SK-N-SH (cell line): ENCODE measurements at regions of chr17 and their contacts with region 1.

Region 1: DNA sequence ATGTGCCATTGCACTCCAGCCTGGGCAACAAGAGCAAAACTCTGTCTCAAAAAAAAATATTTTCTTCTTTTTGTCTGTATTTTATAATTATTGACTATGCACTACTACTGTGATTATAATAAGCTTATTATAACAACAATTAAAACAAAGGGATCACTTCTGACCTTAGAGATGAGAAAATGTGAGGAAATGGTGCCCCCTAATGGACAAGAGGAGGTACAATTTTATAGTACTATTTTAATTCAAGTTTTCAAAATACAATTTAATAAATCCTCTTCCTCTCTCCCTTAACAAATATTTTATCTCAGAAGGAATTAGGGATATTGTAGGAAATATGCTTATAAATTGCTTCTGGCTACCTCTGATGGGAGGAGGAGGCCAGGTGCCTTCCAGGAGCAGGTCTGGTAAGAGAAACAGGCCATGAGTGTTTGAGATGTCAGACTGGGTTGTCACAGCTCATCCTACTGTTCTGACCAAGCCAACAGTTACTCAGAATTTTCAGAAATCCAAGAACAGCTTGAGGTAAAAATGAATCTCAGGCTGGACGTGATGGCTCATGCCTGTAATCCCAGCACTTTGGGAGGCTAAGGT is 14.0 kb downstream of the VPS53 start:
- DNase-seq: peak; percentile 58
- H3K4me3 ChIP-seq: peak overlapping the region in 1 of 2 experiments; percentile 47; a peak in 1 of 4 replicates
- H3K27ac ChIP-seq: no peak overlapping the region
- H3K4me1 ChIP-seq: peaks cover 4 to 32% of the 10 kb centered on the region in 2 experiments; a peak in 1 of 4 replicates
- H3K27me3 ChIP-seq: no peaks in the 10 kb centered on the region
- CTCF ChIP-seq: peak; percentile 85
- EP300 ChIP-seq: no peak
- RAD21 ChIP-seq: peak; percentile 83

Region 2: DNA sequence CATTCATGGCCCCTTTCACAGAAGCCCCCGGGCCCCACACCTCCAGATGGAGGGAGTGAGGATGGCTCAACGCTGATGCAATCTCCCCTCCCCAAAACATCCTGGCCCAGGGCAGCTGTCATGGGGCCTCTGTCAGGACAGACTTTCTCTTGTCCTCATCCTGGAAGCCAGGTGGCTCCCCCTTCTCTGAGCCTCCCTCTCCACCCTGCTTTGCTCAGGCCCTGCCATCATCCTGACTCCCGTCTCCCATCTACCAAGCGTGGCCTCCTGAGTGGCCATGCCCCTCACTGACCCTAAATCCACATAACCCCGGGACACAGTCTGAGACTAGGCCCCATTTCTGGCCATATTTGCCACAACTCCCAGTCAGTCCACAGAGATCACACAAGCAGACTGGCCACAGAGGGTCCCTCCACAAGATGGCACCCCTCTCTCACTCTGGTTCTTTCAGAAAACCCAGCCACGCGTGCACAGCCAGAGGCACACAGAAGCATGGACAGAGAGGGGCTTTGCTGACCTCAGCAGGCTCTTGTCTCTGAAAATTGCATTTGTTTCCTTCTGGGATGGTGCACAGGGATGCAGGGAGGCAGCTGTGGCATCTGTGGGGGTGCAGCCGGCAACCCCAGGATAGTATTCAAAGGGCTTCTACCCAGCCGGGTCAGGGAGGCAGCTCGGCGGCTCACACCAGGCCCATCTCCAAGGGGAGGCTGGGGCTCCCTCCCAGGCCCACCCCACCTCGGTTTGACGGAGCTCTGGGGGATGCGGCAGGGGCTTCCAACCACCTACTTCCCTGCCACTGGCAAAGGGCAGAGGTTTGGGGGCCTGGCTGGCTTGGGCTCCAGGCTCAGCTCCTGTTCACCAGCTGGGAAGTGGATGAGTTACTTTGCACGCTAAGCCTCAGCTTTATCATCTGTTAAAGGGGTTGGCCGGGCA is 536.0 kb before region 1 on chr17:
- CTCF ChIA-PET with region 1: interaction called, 12 read pairs
- POLR2A ChIA-PET with region 1: no interaction called
- DNase-seq: peak; percentile 88
- H3K4me3 ChIP-seq: no peak overlapping the region; a peak in 1 of 4 replicates
- H3K27ac ChIP-seq: no peak overlapping the region; a peak in 1 of 4 replicates
- H3K4me1 ChIP-seq: no peaks in the 10 kb centered on the region
- H3K27me3 ChIP-seq: no peaks in the 10 kb centered on the region; the same call in 1 of the 2 replicates
- CTCF ChIP-seq: peak; percentile 54
- EP300 ChIP-seq: no peak
- RAD21 ChIP-seq: peak; percentile 84

Region 3: GRCh38 chr17:497241-498034 is 203.2 kb before region 1 on chr17:
- CTCF ChIA-PET with region 1: interaction called, 14 read pairs
- POLR2A ChIA-PET with region 1: no interaction called
- DNase-seq: no peak
- H3K4me3 ChIP-seq: no peak overlapping the region
- H3K27ac ChIP-seq: no peak overlapping the region
- H3K4me1 ChIP-seq: no peaks in the 10 kb centered on the region; a peak in 1 of 4 replicates
- H3K27me3 ChIP-seq: no peaks in the 10 kb centered on the region
- CTCF ChIP-seq: no peak
- EP300 ChIP-seq: no peak
- RAD21 ChIP-seq: no peak

Region 4: DNA sequence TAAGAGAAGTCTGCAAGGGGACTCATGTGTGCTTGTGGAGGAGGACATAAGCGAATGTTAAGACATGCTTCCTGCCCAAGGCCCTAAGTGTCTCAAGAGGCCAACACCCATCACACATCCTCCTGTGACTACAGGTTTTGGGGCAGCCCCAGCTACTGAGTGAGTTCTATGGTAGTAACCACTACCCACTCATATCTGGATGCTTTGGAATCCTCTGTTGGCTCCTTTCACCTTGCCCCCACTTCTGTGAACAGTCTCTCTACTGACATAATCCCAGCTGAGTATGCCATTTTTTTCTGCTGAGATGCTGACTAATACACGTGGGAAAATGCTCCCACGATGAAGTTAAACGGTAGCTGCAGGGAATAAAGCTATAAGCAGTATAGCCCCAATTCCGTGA is 139.5 kb before region 1 on chr17:
- CTCF ChIA-PET with region 1: interaction called, 13 read pairs
- POLR2A ChIA-PET with region 1: no interaction called
- DNase-seq: no peak
- H3K4me3 ChIP-seq: no peak overlapping the region
- H3K27ac ChIP-seq: peak overlapping the region in 1 of 2 experiments; percentile 82; a peak in 2 of 4 replicates
- H3K4me1 ChIP-seq: peaks cover 0 to 38% of the 10 kb centered on the region in 2 experiments; a peak in 3 of 4 replicates
- H3K27me3 ChIP-seq: no peaks in the 10 kb centered on the region
- CTCF ChIP-seq: no peak
- EP300 ChIP-seq: no peak
- RAD21 ChIP-seq: no peak

Region 5: GRCh38 chr17:601244-601925 is 99.2 kb before region 1 on chr17:
- CTCF ChIA-PET with region 1: interaction called, 20 read pairs
- POLR2A ChIA-PET with region 1: no interaction called
- DNase-seq: peak; percentile 79
- H3K4me3 ChIP-seq: no peak overlapping the region
- H3K27ac ChIP-seq: peak overlapping the region; percentile 59 to 99; a peak in 3 of 4 replicates
- H3K4me1 ChIP-seq: peaks cover 28 to 59% of the 10 kb centered on the region in 2 experiments
- H3K27me3 ChIP-seq: no peaks in the 10 kb centered on the region
- CTCF ChIP-seq: no peak
- EP300 ChIP-seq: peak; percentile 12 to 88; a peak in 2 of 4 replicates
- RAD21 ChIP-seq: no peak; the same call in 1 of the 2 replicates

Region 6: DNA sequence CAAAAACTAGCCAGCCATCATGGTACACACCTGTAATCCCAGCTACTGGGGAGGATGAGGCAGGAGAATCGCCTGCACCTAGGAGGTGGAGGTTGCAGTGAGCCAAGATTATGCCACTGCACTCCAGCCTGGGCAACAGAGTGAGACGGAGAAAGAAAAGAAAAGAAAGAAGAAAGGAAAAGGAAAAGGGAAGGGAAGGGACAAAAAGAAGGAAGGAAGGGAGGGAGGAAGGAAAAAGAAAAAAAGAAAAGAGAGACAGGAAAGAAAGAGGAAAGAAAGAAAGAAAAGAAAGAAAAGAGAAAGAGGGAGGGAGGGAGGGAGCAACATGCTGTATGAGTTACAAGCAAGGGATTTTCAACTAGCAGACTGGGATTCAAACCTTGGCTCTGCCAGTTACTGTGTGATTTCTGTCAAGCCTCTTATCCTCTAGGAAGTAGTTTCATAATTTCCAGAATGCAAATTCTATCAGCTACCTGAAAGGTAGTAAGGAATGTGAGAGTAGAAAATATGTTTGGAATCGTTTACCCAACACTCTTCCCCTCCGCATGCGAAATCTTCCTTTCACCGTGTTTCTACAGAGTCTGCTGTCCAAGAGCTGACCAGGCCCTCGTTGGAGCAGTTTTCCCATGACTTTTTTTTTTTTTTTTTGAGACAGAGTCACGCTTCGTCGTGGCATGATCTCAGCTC is 29.4 kb before region 1 on chr17:
- CTCF ChIA-PET with region 1: no interaction called
- POLR2A ChIA-PET with region 1: no interaction called
- DNase-seq: no peak
- H3K4me3 ChIP-seq: no peak overlapping the region
- H3K27ac ChIP-seq: no peak overlapping the region
- H3K4me1 ChIP-seq: peaks cover 0 to 3% of the 10 kb centered on the region in 2 experiments; a peak in 1 of 4 replicates
- H3K27me3 ChIP-seq: no peaks in the 10 kb centered on the region
- CTCF ChIP-seq: no peak
- EP300 ChIP-seq: no peak
- RAD21 ChIP-seq: no peak

Region 7: GRCh38 chr17:688100-688989 is 12.3 kb before region 1 on chr17:
- CTCF ChIA-PET with region 1: interaction called, 35 read pairs
- POLR2A ChIA-PET with region 1: no interaction called
- DNase-seq: no peak
- H3K4me3 ChIP-seq: no peak overlapping the region
- H3K27ac ChIP-seq: no peak overlapping the region
- H3K4me1 ChIP-seq: peaks cover 0 to 16% of the 10 kb centered on the region in 2 experiments; a peak in 2 of 4 replicates
- H3K27me3 ChIP-seq: no peaks in the 10 kb centered on the region
- CTCF ChIP-seq: peak; percentile 38
- EP300 ChIP-seq: no peak
- RAD21 ChIP-seq: peak; percentile 54

Region 8: DNA sequence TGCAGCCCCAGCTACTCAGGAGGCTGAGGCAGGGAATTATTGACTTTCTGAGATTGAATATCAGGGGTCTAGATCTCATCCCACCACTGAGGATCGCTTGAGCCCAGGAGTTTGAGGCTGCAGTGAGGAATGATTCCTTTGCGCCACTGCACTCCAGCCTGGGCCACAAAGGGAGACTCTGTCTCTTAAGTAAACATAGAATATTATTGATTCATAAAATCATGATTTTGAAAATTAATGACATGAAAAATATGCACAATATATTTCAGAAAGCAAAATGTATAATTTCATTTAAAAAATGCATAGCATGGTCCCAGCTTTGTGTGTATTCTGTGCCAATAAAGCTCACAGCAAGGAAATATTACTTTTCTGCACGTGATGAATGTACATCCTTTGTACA is 15.6 kb after region 1 on chr17:
- CTCF ChIA-PET with region 1: interaction called, 15 read pairs
- POLR2A ChIA-PET with region 1: interaction called, 5 read pairs
- DNase-seq: no peak
- H3K4me3 ChIP-seq: no peak overlapping the region
- H3K27ac ChIP-seq: no peak overlapping the region
- H3K4me1 ChIP-seq: peaks cover 5 to 7% of the 10 kb centered on the region in 2 experiments; a peak in 2 of 4 replicates
- H3K27me3 ChIP-seq: no peaks in the 10 kb centered on the region
- CTCF ChIP-seq: no peak
- EP300 ChIP-seq: no peak
- RAD21 ChIP-seq: no peak